ENCODE measurements at regions of chr3 and their contacts with region 1.

Region 1: GRCh38 chr3:149120051-149120972 is 9.1 kb upstream of the HPS3 start:
- DNase-seq: peak; percentile 31
- ATAC-seq: peak; percentile 89
- H3K4me3 Mint-ChIP-seq: no peak overlapping the region
- H3K27ac Mint-ChIP-seq: no peak overlapping the region
- H3K4me1 Mint-ChIP-seq: no peaks in the 10 kb centered on the region
- H3K27me3 Mint-ChIP-seq: peaks cover 7% of the 10 kb centered on the region

Region 2: DNA sequence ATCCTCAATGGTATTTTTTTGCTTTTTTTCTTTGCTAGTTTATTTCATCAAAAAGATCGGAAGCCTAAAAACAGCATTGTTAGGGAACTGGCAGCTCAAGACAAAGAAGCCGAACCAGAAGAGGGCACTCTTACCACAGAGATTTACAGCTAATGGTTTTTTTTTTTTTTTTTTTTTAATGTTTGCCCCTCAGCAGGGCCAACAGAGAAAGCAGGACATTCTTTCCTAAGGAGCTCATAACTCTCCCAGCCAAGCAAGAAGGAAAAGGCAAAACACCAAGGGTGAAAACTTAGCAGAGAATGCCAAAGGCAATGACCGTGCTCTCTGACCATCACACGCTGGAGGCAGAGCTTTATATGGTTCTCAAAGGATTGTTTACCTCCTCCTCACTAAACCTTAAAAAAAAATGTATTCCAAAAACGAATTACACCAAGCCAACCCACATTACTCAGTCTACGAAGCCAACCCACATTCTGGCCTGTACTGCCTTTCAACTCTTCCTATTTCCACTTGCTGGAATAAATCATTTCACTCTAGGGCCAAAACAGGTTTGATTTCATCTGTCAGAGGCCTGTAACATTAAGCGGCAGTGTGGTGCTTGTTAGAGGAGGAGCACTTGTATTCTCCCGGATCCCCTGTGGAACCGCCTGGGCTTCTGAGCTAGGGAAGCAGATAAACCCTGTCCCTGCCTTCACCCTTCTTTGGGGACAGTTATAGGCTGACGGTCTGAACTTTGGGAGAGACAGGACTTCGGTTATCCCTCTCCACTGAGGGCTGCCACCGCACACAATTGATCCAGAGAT is 164.6 kb before region 1 on chr3:
- CTCF ChIA-PET with region 1: interaction called, 66 read pairs
- POLR2A ChIA-PET with region 1: no interaction called
- DNase-seq: peak; percentile 51
- ATAC-seq: no peak
- H3K4me3 Mint-ChIP-seq: no peak overlapping the region
- H3K27ac Mint-ChIP-seq: no peak overlapping the region
- H3K4me1 Mint-ChIP-seq: peaks cover 9% of the 10 kb centered on the region
- H3K27me3 Mint-ChIP-seq: peaks cover 20% of the 10 kb centered on the region

Region 3: DNA sequence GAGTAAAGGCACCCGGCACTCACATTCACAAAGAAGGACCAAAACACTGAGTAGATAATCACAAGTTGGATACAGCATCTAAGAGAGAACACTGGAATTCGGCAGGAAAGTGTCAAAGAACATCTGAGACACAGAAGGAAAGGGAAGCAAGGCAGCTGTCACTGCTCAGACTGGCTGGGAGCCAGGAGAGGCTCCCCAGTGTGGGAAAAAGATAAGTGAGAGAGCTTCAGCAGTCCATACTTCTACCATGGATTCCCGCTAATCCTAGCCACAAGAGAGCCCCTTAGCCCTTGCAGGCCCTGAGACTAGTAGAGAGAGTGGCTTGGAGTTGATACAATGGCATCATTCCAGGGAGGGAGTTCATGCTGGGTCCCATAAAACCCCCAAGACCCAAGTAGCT is 138.0 kb after region 1 on chr3:
- CTCF ChIA-PET with region 1: interaction called, 10 read pairs
- POLR2A ChIA-PET with region 1: no interaction called
- DNase-seq: no peak
- ATAC-seq: no peak
- H3K4me3 Mint-ChIP-seq: no peak overlapping the region
- H3K27ac Mint-ChIP-seq: no peak overlapping the region
- H3K4me1 Mint-ChIP-seq: peaks cover 8% of the 10 kb centered on the region
- H3K27me3 Mint-ChIP-seq: peaks cover 18% of the 10 kb centered on the region

Region 4: DNA sequence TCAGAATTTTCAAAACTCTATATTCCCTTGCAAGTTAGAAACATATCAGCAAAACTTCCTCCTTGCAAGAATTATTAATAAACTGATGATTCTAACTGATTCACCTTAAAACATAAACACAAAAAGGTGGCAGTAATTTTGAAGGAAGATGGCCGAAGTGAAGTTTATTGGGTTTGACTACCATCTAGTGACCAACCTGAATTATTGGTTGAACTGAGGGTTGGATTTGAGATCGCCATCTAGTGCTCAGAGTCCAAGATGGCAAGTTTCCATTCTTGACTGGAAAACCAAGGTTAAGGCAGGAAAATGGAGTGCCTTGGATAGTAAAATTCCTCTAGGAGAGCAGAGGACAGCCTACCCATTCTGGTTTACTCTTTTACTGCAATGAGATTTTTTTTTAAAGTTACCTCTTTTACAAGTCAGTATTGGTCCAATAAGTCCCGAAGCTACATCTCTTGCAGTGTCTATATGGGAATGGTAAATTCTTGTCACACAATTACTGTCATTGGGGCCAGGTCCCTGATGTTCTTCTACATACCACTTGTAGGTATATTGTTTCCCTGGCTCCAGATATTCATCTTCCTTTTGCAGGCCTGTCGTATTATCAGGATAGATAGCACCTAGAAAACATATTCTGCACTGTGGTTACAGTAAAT is 152.9 kb after region 1 on chr3:
- CTCF ChIA-PET with region 1: interaction called, 113 read pairs
- POLR2A ChIA-PET with region 1: no interaction called
- DNase-seq: peak; percentile 54
- ATAC-seq: peak; percentile 70
- H3K4me3 Mint-ChIP-seq: no peak overlapping the region
- H3K27ac Mint-ChIP-seq: no peak overlapping the region
- H3K4me1 Mint-ChIP-seq: peaks cover 15% of the 10 kb centered on the region
- H3K27me3 Mint-ChIP-seq: peaks cover 3% of the 10 kb centered on the region

Region 5: DNA sequence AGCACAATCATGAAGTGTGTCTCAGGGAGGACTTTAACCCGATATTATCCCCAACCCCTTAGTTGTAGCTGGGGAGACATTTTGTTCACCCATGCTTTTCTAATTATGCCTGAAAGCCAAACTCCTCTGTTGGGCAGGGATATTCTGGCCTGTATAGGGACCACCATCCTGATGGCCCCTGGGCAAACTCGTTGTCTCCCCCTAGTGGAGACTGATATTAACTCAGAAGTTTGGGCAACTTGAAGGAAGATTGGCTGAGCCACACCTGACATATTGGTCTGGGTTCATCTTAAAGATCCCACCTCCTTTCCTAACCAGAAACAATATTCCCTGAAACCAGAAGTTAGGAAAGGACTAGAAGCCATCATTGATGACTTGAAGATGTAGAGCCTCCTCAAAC is 170.9 kb after region 1 on chr3:
- CTCF ChIA-PET with region 1: interaction called, 11 read pairs
- POLR2A ChIA-PET with region 1: no interaction called
- DNase-seq: peak; percentile 27
- ATAC-seq: no peak
- H3K4me3 Mint-ChIP-seq: no peak overlapping the region
- H3K27ac Mint-ChIP-seq: no peak overlapping the region
- H3K4me1 Mint-ChIP-seq: no peaks in the 10 kb centered on the region
- H3K27me3 Mint-ChIP-seq: peaks cover 2% of the 10 kb centered on the region

Region 6: DNA sequence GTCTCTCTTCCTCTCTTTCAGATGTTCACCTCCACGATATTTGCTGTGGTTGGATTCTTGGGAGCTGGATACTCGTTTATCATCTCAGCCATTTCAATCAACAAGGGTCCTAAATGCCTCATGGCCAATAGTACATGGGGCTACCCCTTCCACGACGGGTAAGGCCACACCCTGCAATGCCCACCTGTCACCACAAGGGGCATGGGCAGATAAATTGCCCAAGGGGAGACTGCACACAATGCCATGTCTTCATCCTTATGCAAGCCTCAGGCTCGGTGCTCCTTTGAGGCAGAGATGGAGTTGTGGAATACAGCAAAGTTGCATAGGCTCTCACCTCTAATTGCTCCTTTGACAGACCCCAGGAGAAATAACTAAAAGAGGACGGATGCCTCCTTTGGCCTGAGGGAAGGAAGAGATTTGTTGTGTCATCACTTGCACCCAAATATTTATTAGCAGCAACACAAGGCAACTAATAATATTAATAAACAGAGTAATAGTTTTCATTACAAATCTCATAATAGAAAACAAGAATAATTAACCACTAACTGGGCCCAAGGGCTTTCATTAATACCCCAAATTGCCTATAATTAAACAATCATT is 367.4 kb after region 1 on chr3:
- CTCF ChIA-PET with region 1: no interaction called
- POLR2A ChIA-PET with region 1: no interaction called
- DNase-seq: peak; percentile 43
- ATAC-seq: no peak
- H3K4me3 Mint-ChIP-seq: no peak overlapping the region
- H3K27ac Mint-ChIP-seq: no peak overlapping the region
- H3K4me1 Mint-ChIP-seq: no peaks in the 10 kb centered on the region
- H3K27me3 Mint-ChIP-seq: peaks cover 8% of the 10 kb centered on the region

Measured in activated CD8-positive, alpha-beta T cell treated with anti-CD3 and anti-CD28 coated beads, Interleukin-2, amount 10 ng/mL, durations not matched to agents 7 days and 5 days (primary cell).